A549 (cell line): ENCODE measurements at regions of chr6 and their contacts with region 1.

Region 1: DNA sequence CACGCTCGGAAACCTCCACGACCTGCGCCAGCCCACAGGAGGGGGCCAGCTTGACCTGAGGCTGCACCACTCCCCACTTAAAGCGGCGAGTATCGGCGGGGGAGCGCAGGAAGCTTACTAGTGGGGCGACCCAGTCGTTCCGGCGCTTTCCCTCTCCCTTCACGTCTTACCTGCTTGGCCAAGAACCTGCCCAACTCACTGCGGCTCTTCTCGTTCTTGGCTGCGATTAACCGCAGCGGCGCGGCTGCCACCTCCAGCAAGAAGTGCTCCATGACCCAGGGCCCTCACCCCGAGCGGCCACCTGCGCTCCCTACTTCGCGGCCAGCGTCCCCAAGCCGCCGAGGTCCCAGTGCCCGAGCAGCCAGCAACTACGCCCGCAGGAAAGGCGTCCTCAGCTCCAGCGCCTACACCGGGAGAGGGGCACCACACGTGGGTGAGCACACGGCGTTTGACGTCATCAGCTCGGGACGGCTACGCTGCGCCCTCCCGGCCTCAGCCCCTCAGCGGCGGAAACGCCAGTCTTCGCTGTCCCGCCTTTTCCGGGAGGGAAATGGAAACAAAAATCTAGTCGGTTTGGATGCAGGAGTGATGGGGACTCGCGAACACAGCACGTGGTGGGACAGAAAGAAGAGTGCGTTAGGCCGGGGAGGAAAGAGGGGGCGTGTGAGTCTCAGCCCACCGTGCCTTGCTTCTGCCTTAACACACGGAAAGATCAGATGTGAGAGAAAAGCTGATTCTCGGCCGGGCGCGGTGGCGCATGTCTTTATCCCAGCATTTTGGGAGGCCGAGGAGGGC is at the start of gene MDN1:
- DNase-seq: peak; percentile 78 to 92
- ATAC-seq: peak; percentile 99
- H3K4me3 ChIP-seq: peak within 1 kb of the TSS; percentile 69
- H3K27ac ChIP-seq: peak within 1 kb of the TSS; percentile 80 to 91
- H3K4me1 ChIP-seq: peaks cover 16% of the 10 kb centered on the region
- CTCF ChIP-seq: no peak
- EP300 ChIP-seq: no peak
- POLR2A ChIP-seq: peak; percentile 85
- RAD21 ChIP-seq: no peak
- polyA plus RNA-seq, gene MDN1: 20.5 and 32.5 TPM in 2 replicates

Region 2: GRCh38 chr6:89494131-89494796 is 325.3 kb before region 1 on chr6:
- CTCF ChIA-PET with region 1: no interaction called
- POLR2A ChIA-PET with region 1: no interaction called
- DNase-seq: no peak
- ATAC-seq: 0 out of 6 replicates have a peak, but pooled peaks of 1 of the 2 experiments have one; percentile 35
- H3K4me3 ChIP-seq: no peak overlapping the region
- H3K27ac ChIP-seq: no peak overlapping the region
- H3K4me1 ChIP-seq: no peaks in the 10 kb centered on the region
- CTCF ChIP-seq: no peak
- EP300 ChIP-seq: no peak
- POLR2A ChIP-seq: no peak
- RAD21 ChIP-seq: no peak

Region 3: DNA sequence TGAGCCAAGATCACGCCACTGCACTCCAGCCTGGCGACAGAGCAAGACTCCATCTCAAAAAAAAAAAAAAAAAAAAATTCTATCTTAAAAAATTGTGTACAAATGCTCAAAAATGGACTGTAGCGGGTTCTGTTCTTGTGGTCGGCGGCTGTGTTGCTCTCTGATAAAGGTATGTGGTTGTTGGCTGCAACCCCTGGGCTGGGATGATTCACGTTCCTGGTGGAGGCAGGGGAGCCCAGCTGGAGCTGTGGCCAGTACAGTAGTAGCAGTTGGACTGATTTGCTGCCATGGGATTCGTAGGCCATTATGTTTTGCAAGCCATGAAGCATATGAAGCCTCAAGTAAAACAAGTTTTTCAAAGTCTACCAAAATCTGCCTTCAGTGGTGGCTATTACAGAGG is 22.2 kb before region 1 on chr6:
- CTCF ChIA-PET with region 1: interaction called, 3 read pairs
- POLR2A ChIA-PET with region 1: interaction called, 12 read pairs
- DNase-seq: no peak
- ATAC-seq: no peak
- H3K4me3 ChIP-seq: no peak overlapping the region
- H3K27ac ChIP-seq: no peak overlapping the region
- H3K4me1 ChIP-seq: no peaks in the 10 kb centered on the region
- CTCF ChIP-seq: no peak
- EP300 ChIP-seq: no peak
- POLR2A ChIP-seq: no peak
- RAD21 ChIP-seq: no peak

Region 4: DNA sequence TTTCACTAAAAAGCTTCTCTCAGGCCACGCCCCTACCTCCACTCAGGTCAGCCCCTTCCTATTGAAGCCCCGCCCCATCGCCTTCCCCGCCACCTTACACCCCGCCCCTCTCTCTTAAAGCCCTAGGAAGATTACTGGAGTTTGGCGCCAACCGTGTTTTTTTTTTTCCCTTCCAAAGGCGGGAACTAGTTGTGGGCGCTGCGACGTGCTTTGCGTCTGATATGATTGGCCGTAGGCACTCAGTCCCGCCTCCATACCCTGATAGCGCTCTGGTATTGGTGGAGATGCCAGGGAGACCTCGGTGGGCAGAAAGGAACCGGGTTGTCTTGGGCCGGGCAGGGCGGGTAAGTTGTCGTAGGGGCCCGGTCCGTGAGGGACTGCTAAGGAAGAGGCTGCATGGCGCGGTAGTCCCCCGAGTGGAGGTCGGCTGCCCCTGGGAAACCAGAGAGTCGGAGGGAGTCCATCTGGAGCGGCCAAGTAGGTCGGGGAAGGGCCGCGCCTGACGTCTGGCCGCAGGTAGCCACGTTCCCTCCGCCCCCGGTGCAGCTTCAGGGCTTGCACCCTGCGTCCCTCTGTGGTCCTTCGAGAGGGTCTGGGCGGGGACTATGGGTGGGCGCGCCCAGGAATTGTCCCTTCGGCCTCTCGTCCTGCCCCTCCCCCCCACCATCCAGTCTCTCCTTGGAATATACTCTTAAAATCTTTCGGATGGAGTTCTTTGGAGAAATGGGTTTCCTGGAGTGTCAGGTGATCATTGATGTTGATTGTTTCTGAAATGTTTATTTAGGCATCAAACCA is 10.3 kb after region 1 on chr6 and contains the start of gene CASP8AP2:
- CTCF ChIA-PET with region 1: interaction called, 4 read pairs
- POLR2A ChIA-PET with region 1: interaction called, 31 read pairs
- DNase-seq: peak; percentile 95 to 97
- ATAC-seq: peak; percentile 100
- H3K4me3 ChIP-seq: peak within 1 kb of the TSS; percentile 80
- H3K27ac ChIP-seq: peak within 1 kb of the TSS; percentile 84 to 96
- H3K4me1 ChIP-seq: peaks cover 5% of the 10 kb centered on the region
- CTCF ChIP-seq: no peak
- EP300 ChIP-seq: no peak
- POLR2A ChIP-seq: peak; percentile 79
- RAD21 ChIP-seq: no peak
- polyA plus RNA-seq, gene CASP8AP2: 8.8 and 13.6 TPM in 2 replicates